CD14-positive monocyte (primary cell): ENCODE measurements at regions of chr2 and their contacts with region 1.

Region 1: DNA sequence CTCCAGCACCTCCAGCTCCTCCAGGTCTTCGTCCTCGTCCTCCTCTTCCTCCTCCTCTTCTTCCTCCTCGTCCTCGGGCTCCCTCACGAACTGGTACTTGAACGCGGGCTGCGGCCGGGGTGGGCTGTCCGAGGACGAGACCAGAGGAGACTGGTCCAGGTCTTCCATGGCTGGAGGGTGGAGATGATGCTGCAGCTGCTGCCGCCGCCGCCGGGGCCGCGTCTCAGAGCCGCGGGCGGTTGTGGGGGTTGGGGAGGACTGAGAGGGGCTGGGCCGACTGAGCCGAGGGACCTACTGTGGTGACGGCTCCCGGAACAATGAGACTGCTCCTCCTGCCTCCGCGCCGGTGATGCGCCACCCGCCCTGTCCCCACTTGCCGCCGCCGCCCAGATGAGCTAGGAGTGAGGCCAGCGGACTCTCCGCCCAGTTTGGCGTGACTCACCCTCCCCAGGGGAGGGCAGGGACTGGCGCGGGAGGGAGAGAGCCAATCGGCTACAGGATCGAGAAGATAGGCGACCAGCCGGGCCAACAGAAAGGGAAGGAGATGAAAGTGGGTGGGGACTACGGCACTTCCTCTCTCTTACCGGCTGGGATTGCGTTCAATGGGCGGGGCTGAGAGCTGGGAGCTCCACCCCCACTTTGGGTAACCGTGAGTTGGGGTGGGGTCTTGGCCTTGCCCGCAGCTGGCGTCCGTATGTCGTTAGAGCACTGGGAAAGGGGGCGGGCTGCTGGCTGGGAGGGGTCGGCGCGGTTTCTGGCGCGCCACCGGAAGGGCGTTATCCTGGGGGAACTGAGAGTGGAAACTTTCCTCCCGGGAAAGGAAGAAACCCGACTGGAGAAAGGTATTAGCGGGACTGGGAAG is at the start of gene RTN4:
- DNase-seq: peak; percentile 98 to 100 (median 100)
- H3K4me3 ChIP-seq: peak within 1 kb of the TSS; percentile 78 to 100 (median 89)
- H3K4me3 Mint-ChIP-seq: peak within 1 kb of the TSS; percentile 100
- H3K27ac ChIP-seq: peak within 1 kb of the TSS; percentile 95 to 98
- H3K27ac Mint-ChIP-seq: peak within 1 kb of the TSS; percentile 98 to 100 (median 100)
- H3K4me1 ChIP-seq: peaks cover 42 to 54% of the 10 kb centered on the region in 2 donors
- H3K4me1 Mint-ChIP-seq: peaks cover 47% of the 10 kb centered on the region
- H3K27me3 ChIP-seq: no peaks in the 10 kb centered on the region
- H3K27me3 Mint-ChIP-seq: no peaks in the 10 kb centered on the region
- CTCF ChIP-seq: no peak
- polyA plus RNA-seq, gene RTN4: 111 to 163 (median 158) TPM

Region 2: GRCh38 chr2:55010149-55010591 is 40.2 kb before region 1 on chr2:
- intact Hi-C with region 1: loop called (anchors 5 kb)
- DNase-seq: peak; percentile 79 to 84 (median 82)
- H3K4me3 ChIP-seq: peak overlapping the region; percentile 35 to 85 (median 68)
- H3K4me3 Mint-ChIP-seq: peak overlapping the region; percentile 80 to 87
- H3K27ac ChIP-seq: peak overlapping the region; percentile 48 to 86
- H3K27ac Mint-ChIP-seq: peak overlapping the region; percentile 88 to 97 (median 94)
- H3K4me1 ChIP-seq: peaks cover 26 to 38% of the 10 kb centered on the region in 2 donors
- H3K4me1 Mint-ChIP-seq: peaks cover 49% of the 10 kb centered on the region
- H3K27me3 ChIP-seq: no peaks in the 10 kb centered on the region
- H3K27me3 Mint-ChIP-seq: no peaks in the 10 kb centered on the region
- CTCF ChIP-seq: no peak

Region 3: GRCh38 chr2:55093381-55093780 is 43.0 kb after region 1 on chr2:
- intact Hi-C with region 1: no loop called
- DNase-seq: peak; percentile 18 to 72 (median 68)
- H3K4me3 ChIP-seq: no peak overlapping the region
- H3K4me3 Mint-ChIP-seq: peak overlapping the region in 1 of 2 donors; percentile 44
- H3K27ac ChIP-seq: peak overlapping the region in 1 of 2 donors; percentile 21
- H3K27ac Mint-ChIP-seq: peak overlapping the region; percentile 17 to 89 (median 80)
- H3K4me1 ChIP-seq: peaks cover 40 to 57% of the 10 kb centered on the region in 2 donors
- H3K4me1 Mint-ChIP-seq: peaks cover 36% of the 10 kb centered on the region
- H3K27me3 ChIP-seq: no peaks in the 10 kb centered on the region
- H3K27me3 Mint-ChIP-seq: peaks cover 0 to 2% (median 0%) of the 10 kb centered on the region in 3 donors
- CTCF ChIP-seq: no peak

Region 4: DNA sequence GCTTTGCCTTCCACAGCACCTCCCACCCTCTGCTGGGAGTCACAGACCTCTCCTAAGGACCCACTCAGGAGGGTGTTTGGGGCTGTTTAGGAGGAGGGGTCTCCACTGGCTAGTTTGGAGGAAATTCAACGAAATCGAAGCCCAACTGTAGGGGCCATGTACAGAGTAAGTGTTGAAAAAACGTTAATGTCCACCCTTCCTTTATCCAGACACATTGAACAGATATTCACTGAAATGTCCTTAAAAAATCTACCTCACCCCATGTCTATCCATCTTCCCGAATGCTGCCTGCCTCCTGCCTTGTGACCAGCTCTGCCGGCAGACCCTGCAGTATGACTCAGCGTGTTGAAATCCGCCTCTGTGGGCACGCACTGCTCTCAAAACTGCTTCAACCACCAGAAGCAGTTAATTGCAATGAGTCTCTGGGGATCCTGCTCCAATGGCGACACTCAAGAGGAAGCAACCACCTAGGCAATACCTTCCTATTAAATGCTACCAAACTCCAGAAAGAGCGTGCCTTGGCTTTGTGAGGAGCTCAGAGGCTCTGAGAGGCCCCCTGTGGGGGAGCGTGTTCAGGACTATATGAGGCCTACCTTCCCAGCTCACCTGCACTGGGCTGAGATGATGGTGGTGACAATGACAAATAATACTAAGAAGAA is 61.3 kb after region 1 on chr2:
- intact Hi-C with region 1: loop called (anchors 10 kb)
- DNase-seq: peak; percentile 91 to 97 (median 95)
- H3K4me3 ChIP-seq: peak overlapping the region in 1 of 3 experiments; percentile 54
- H3K4me3 Mint-ChIP-seq: peak overlapping the region; percentile 34 to 88
- H3K27ac ChIP-seq: peak overlapping the region; percentile 85 to 96
- H3K27ac Mint-ChIP-seq: peak overlapping the region; percentile 88 to 98 (median 94)
- H3K4me1 ChIP-seq: peaks cover 50 to 52% of the 10 kb centered on the region in 2 donors
- H3K4me1 Mint-ChIP-seq: peaks cover 49% of the 10 kb centered on the region
- H3K27me3 ChIP-seq: no peaks in the 10 kb centered on the region
- H3K27me3 Mint-ChIP-seq: peaks cover 0 to under 1% (median 0%) of the 10 kb centered on the region in 3 donors
- CTCF ChIP-seq: no peak

Region 5: GRCh38 chr2:55159037-55159651 is 108.8 kb after region 1 on chr2:
- intact Hi-C with region 1: loop called in 1 of 2 experiments (anchors 10 kb)
- DNase-seq: peak in 1 of 3 donors; percentile 16
- H3K4me3 ChIP-seq: no peak overlapping the region
- H3K4me3 Mint-ChIP-seq: no peak overlapping the region
- H3K27ac ChIP-seq: peak overlapping the region; percentile 20 to 54
- H3K27ac Mint-ChIP-seq: peak overlapping the region in 6 of 7 donors; percentile 42 to 68 (median 56)
- H3K4me1 ChIP-seq: peaks cover 60 to 66% of the 10 kb centered on the region in 2 donors
- H3K4me1 Mint-ChIP-seq: peaks cover 70% of the 10 kb centered on the region
- H3K27me3 ChIP-seq: no peaks in the 10 kb centered on the region
- H3K27me3 Mint-ChIP-seq: peaks cover 0 to 5% (median 0%) of the 10 kb centered on the region in 3 donors
- CTCF ChIP-seq: no peak

Region 6: GRCh38 chr2:55196506-55196905 is 146.1 kb after region 1 on chr2:
- intact Hi-C with region 1: no loop called
- DNase-seq: no peak
- H3K4me3 ChIP-seq: no peak overlapping the region
- H3K4me3 Mint-ChIP-seq: no peak overlapping the region
- H3K27ac ChIP-seq: no peak overlapping the region
- H3K27ac Mint-ChIP-seq: no peak overlapping the region
- H3K4me1 ChIP-seq: no peaks in the 10 kb centered on the region
- H3K4me1 Mint-ChIP-seq: no peaks in the 10 kb centered on the region
- H3K27me3 ChIP-seq: no peaks in the 10 kb centered on the region
- H3K27me3 Mint-ChIP-seq: peaks cover 0 to 1% (median 0%) of the 10 kb centered on the region in 3 donors
- CTCF ChIP-seq: no peak